SK-N-SH (cell line): ENCODE measurements at regions of chr7 and their contacts with region 1.

Region 1: GRCh38 chr7:138935465-138936011 is 45.7 kb downstream of the KIAA1549 start:
- DNase-seq: peak; percentile 89
- H3K4me3 ChIP-seq: no peak overlapping the region; a peak in 2 of 4 replicates
- H3K27ac ChIP-seq: peak overlapping the region; percentile 88 to 99
- H3K4me1 ChIP-seq: peaks cover 21 to 45% of the 10 kb centered on the region in 2 experiments
- H3K27me3 ChIP-seq: no peaks in the 10 kb centered on the region
- CTCF ChIP-seq: no peak
- EP300 ChIP-seq: peak; percentile 61 to 94; a peak in 3 of 4 replicates
- RAD21 ChIP-seq: peak; percentile 40

Region 2: DNA sequence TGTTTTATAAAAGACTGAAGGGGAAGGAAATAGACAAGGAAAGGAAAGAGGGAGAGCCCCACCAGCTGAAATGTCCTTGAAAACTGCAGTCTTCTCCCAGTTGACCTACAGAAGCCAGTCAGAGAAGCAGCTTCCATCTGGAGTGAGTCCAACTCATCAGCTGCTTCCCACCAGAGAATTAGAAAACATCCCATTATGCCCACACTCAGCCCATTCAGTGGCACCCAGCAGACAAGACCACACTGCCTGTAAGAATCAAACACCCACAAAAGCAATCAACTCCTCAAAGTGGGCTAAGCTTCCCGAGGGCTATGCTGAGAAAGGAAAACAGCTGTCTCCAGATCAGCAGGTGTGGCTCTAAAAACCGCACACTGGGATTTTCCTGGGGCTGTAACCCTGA is 167.3 kb before region 1 on chr7:
- CTCF ChIA-PET with region 1: no interaction called
- POLR2A ChIA-PET with region 1: no interaction called
- DNase-seq: no peak
- H3K4me3 ChIP-seq: no peak overlapping the region
- H3K27ac ChIP-seq: no peak overlapping the region
- H3K4me1 ChIP-seq: no peaks in the 10 kb centered on the region
- H3K27me3 ChIP-seq: no peaks in the 10 kb centered on the region
- CTCF ChIP-seq: no peak
- EP300 ChIP-seq: no peak
- RAD21 ChIP-seq: no peak

Region 3: DNA sequence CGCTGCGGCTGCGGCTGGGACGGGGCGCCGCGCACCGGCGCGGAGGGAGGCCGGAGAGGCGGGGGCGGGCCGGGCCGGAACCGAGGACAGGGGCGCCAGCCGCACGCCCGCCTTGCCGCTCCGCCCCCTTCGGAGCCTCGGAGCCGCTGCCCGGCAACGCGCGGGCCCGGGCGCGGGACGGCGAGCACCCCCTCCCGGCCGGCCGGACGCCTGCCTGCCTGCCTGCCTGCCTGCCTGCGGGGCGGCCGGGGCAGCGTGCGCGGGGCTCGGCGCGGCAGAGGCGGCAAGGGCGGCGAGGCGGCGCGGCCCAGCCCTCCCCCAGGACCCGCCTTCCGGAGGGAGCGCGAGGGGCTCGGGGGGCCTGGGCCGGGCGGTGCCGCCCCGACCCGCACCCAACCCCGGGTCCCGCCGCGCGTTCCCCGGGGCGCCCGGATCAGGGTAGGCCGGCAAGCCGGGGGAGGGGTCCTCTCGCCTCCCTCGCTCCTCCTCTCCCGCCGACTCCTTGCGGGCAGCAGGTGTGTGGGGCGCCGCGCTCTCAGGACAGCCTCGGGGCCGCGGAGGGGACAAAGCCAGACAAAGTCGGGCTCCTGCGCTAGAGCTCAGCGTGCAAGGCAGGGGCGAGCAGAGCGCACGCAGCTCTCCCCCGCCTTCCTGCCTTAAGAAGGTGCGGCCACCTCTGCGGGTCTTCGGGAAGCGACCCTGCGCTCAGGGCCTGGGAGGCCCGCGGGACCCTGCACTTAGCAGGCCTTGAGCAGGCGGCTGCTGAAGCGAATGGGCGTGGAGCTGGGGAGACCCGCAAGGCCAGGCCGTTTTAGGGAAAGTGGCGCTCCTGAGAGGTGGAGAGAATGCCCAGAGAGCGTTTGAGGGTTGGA is 46.0 kb after region 1 on chr7 and contains the start of gene KIAA1549:
- CTCF ChIA-PET with region 1: interaction called, 14 read pairs
- POLR2A ChIA-PET with region 1: interaction called, 7 read pairs
- DNase-seq: peak; percentile 98
- H3K4me3 ChIP-seq: peak within 1 kb of the TSS; percentile 59 to 89
- H3K27ac ChIP-seq: peak within 1 kb of the TSS; percentile 35 to 64; a peak in 3 of 4 replicates
- H3K4me1 ChIP-seq: peaks cover 0 to 37% of the 10 kb centered on the region in 2 experiments; a peak in 2 of 4 replicates
- H3K27me3 ChIP-seq: no peaks in the 10 kb centered on the region
- CTCF ChIP-seq: no peak
- EP300 ChIP-seq: no peak
- RAD21 ChIP-seq: peak; percentile 56
- polyA plus RNA-seq, gene KIAA1549: 3.0 and 3.6 TPM in 2 replicates